A673 (cell line): ENCODE measurements at regions of chr16 and their contacts with region 1.

Region 1: GRCh38 chr16:77298638-77299360 is 99.6 kb downstream of the SYCE1L start:
- DNase-seq: no peak
- H3K4me3 ChIP-seq: no peak overlapping the region
- H3K27ac ChIP-seq: no peak overlapping the region
- H3K4me1 ChIP-seq: no peaks in the 10 kb centered on the region
- H3K27me3 ChIP-seq: peaks cover 36% of the 10 kb centered on the region
- CTCF ChIP-seq: no peak

Region 2: GRCh38 chr16:77359065-77359502 is 60.3 kb after region 1 on chr16:
- CTCF ChIA-PET with region 1: no interaction called
- POLR2A ChIA-PET with region 1: no interaction called
- intact Hi-C with region 1: loop called (anchors 10 kb)
- DNase-seq: no peak
- H3K4me3 ChIP-seq: no peak overlapping the region
- H3K27ac ChIP-seq: no peak overlapping the region
- H3K4me1 ChIP-seq: no peaks in the 10 kb centered on the region
- H3K27me3 ChIP-seq: peaks cover 20% of the 10 kb centered on the region
- CTCF ChIP-seq: no peak